ENCODE measurements at regions of chr2 and their contacts with region 1.

Region 1: GRCh38 chr2:37982147-37982582 is 57.1 kb downstream of the RMDN2 start:
- DNase-seq: peak; percentile 44
- ATAC-seq: peak; percentile 67
- H3K4me3 ChIP-seq: no peak overlapping the region
- H3K27ac ChIP-seq: no peak overlapping the region
- H3K4me1 ChIP-seq: peaks cover 0 to 6% of the 10 kb centered on the region in 2 experiments; a peak in 2 of 4 replicates
- H3K27me3 ChIP-seq: no peaks in the 10 kb centered on the region
- CTCF ChIP-seq: peak; percentile 71 to 95 (median 82); a peak in 5 of 6 replicates
- POLR2A ChIP-seq: no peak
- RAD21 ChIP-seq: peak; percentile 75

Region 2: GRCh38 chr2:37993143-37993542 is 11.0 kb after region 1 on chr2:
- CTCF ChIA-PET with region 1: interaction called, 11 read pairs
- POLR2A ChIA-PET with region 1: no interaction called
- RAD21 ChIA-PET with region 1: no interaction called
- intact Hi-C with region 1: no loop called
- DNase-seq: no peak
- ATAC-seq: 0 out of 2 replicates have a peak, but pooled peaks have one; percentile 32
- H3K4me3 ChIP-seq: no peak overlapping the region
- H3K27ac ChIP-seq: no peak overlapping the region
- H3K4me1 ChIP-seq: no peaks in the 10 kb centered on the region
- H3K27me3 ChIP-seq: no peaks in the 10 kb centered on the region
- CTCF ChIP-seq: peak; percentile 36 to 37 (median 36); a peak in 4 of 6 replicates
- POLR2A ChIP-seq: no peak
- RAD21 ChIP-seq: peak; percentile 44

Region 3: GRCh38 chr2:38115216-38116032 is 133.3 kb after region 1 on chr2:
- CTCF ChIA-PET with region 1: interaction called, 4 read pairs
- POLR2A ChIA-PET with region 1: no interaction called
- RAD21 ChIA-PET with region 1: no interaction called
- intact Hi-C with region 1: loop called (anchors 1 kb)
- DNase-seq: peak; percentile 59
- ATAC-seq: peak; percentile 97
- H3K4me3 ChIP-seq: no peak overlapping the region
- H3K27ac ChIP-seq: no peak overlapping the region
- H3K4me1 ChIP-seq: no peaks in the 10 kb centered on the region
- H3K27me3 ChIP-seq: no peaks in the 10 kb centered on the region
- CTCF ChIP-seq: peak; percentile 84 to 99 (median 97)
- POLR2A ChIP-seq: no peak
- RAD21 ChIP-seq: peak; percentile 84

Region 4: DNA sequence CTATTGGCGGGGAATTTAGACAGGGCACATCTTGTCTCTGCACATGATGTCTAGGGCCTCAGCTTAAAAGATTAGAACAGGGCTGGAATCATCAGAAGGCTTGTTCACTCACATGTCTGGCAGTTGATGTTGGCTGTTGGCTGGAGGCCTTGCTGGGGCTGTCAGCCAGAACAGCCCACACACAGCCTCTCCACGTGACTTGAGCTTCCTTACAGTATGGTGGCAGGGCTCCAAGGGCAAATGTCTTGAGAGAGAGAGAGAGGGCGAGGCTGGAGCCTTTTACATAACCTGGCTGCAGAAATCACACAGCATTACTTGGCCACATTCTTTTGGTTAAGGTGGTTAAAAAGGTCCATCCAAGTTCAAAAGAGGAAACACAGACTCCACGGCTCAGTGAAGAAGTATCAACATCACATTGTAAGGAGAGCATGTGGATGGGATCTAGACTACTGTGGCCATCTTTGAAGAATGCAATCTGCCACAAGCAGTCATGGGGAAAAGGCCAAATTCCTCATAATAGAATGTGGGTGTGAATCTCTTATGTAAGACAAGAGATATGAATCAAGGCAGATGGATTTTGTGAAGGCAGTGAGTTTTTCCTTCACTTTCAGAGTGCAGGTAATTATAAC is 738.6 kb after region 1 on chr2:
- CTCF ChIA-PET with region 1: no interaction called
- POLR2A ChIA-PET with region 1: no interaction called
- RAD21 ChIA-PET with region 1: no interaction called
- intact Hi-C with region 1: loop called (anchors 10 kb)
- DNase-seq: no peak
- ATAC-seq: peak; percentile 26
- H3K4me3 ChIP-seq: no peak overlapping the region
- H3K27ac ChIP-seq: no peak overlapping the region
- H3K4me1 ChIP-seq: peaks cover 18 to 23% of the 10 kb centered on the region in 2 experiments; a peak in 3 of 4 replicates
- H3K27me3 ChIP-seq: no peaks in the 10 kb centered on the region
- CTCF ChIP-seq: no peak
- POLR2A ChIP-seq: no peak
- RAD21 ChIP-seq: no peak

Region 5: DNA sequence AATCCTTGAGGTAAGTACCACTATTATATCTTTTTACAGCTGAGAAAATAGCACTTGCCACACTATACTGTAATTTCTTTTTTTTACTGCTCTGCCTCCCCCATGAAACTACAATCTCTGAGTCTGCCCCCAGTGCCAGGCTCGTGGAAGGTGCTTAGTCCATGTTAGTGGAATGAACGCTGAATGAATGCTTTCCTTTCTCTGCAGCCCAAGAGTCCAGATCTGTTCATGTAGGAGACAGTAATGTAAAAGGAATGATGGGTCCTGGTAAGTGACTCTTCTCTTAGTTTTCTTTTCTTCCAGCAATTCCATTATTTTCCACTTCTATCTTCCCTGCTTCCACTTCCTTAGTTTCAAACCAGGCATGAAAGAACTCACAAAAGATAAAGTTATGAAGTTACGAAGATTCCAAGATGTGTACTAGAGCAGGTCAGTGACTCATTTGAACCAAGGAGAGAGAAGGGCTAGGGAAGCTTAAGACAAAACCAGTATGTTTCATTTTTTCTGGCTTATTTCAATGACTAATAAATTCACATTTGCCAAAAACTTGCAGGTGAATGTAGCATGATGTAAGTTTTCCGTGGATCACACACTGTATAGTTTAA is 953.5 kb after region 1 on chr2:
- CTCF ChIA-PET with region 1: no interaction called
- POLR2A ChIA-PET with region 1: no interaction called
- RAD21 ChIA-PET with region 1: no interaction called
- intact Hi-C with region 1: no loop called
- DNase-seq: no peak
- ATAC-seq: no peak
- H3K4me3 ChIP-seq: no peak overlapping the region
- H3K27ac ChIP-seq: no peak overlapping the region
- H3K4me1 ChIP-seq: no peaks in the 10 kb centered on the region
- H3K27me3 ChIP-seq: no peaks in the 10 kb centered on the region; the same call in 1 of the 2 replicates
- CTCF ChIP-seq: no peak
- POLR2A ChIP-seq: no peak
- RAD21 ChIP-seq: no peak